Tibial artery (tissue), 4 donors: ENCODE measurements at regions of chr2 and their contacts with region 1.

Region 1: DNA sequence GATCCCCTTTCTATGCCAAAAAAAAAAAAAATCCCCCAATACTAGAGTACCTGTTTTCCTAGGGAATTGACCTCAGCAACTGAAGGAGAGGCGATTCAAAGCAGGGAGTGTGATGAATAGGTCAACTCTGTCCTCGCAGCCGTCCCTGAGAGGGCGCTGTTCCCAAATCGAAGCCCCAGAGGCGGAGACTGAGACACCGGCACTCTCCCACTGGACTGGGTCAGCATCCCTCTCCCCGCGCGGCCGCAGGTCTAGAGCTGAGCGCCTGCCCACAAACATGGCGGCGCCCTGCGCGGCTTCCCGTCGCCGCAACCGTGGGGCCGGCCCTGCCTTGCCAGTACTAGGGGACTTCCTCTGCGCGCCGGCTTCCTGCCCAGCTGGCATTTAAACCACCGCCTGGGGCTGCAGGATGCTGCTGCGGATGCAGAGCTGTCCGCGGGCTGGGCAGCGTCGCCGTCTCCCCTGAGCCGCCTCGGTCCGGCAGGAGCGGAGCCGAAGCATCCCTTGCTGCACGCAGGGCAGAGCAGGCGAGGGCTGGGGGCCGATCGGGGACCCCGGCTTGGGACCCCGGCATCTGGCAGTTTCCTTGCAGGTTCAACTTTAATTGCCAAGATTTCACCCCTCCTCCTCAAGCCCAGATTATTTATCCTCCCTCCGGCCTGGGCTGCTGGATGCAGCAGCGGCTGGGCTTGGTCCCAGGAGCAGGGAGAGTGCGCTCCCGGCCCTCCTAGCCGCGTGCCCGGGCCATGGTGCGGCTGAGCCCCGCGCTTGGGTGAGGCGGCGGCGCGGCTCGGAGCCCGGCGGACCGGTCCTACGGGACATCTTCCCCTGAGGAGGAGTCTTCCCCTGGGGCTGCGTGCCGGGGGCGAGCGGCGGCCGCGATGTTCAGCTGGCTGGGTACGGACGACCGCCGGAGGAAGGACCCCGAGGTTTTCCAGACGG is at the start of gene EHD3:
- DNase-seq: peak; percentile 84 to 93
- H3K4me3 ChIP-seq: peak within 1 kb of the TSS; percentile 54 to 63
- H3K27ac ChIP-seq: peak within 1 kb of the TSS; percentile 66 to 82
- H3K4me1 ChIP-seq: peaks cover 0 to 43% (median 32%) of the 10 kb centered on the region in 4 donors
- H3K27me3 ChIP-seq: no peaks in the 10 kb centered on the region
- CTCF ChIP-seq: peak; percentile 61 to 67

Region 2: DNA sequence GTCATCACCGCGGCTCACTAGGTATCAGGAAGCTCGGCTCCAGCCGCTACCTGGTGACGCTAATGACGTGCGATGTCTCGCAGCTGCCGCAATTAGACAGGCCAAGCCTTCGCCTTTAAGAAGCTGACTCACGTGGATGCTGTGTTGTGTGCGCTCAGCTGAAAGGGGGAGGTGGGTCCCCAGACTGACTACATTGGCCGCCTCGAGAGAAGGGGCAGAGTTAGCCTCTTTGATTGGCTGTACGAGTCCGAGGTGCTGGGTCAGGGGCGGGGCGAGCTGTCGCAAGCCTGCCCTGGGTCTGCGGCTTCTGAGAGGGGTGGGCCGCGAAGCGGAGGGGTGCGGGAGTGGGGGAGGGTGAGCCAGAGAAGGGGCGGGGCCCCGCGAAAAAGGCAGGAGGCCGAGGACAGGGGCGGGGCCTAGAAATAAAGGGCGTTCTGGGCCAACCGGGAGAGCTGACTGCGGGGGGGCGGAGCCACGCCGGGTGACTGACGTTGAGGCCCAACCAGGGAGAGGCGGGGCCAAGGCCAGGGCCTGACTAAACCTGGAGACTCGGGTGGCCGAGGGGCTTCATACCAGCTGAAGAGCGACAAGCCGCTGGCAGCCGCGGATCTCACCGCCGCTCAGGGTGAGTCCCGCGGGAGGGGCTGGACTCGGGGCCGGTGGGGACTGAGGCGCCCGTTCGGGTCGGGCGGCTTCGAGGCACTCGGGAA is 1087.4 kb before region 1 on chr2 and contains the start of gene YPEL5:
- intact Hi-C with region 1: loop called (anchors 10 kb)
- DNase-seq: peak; percentile 99 to 100
- H3K4me3 ChIP-seq: peak within 1 kb of the TSS; percentile 84 to 98
- H3K27ac ChIP-seq: peak within 1 kb of the TSS; percentile 98 to 99
- H3K4me1 ChIP-seq: peaks cover 0 to 43% (median 32%) of the 10 kb centered on the region in 4 donors
- H3K27me3 ChIP-seq: no peaks in the 10 kb centered on the region
- CTCF ChIP-seq: no peak

Region 3: DNA sequence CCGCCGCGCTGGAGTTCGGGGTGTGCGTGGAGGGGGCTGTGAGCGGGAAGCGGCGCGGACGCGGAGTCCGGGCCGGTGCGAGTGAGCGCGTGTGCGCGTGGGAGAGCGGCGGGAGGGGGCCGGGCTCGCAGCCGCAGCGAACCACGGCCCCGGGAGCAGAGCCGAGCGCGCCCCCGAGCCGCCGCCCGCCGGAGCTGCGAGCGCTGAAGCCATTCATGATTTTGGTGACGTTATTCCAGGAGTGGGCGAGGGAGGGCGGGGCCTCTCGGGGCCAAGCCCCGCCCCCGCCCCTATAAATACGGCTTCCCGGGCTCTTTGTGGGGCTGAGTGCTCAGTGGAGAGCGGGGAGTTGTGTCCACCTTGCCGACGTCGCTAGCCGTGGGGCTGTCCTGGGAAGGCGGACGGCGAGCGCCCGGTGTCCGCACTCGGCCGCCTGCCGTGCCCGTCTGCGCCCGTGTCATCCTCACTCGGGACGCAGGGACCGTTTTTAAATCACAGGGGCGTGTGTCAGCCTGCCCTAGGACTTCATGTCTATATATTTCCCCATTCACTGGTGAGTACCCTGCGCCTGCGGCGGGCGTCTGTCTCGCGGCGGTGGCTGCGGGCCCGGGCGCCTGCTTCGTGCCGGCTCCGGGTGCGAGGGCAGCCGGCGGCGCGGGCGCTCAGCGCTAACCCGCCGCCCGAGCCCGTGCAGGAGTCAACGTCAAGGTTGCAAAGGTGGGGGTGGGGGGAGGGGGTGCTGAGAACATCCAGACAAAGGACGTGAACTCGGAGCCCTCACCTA is 1002.6 kb before region 1 on chr2 and contains the start of gene LBH:
- intact Hi-C with region 1: loop called (anchors 10 kb)
- DNase-seq: peak; percentile 84 to 96
- H3K4me3 ChIP-seq: peak within 1 kb of the TSS; percentile 64 to 91
- H3K27ac ChIP-seq: peak within 1 kb of the TSS; percentile 93 to 94
- H3K4me1 ChIP-seq: peaks cover 0 to 47% (median 38%) of the 10 kb centered on the region in 4 donors
- H3K27me3 ChIP-seq: no peaks in the 10 kb centered on the region
- CTCF ChIP-seq: no peak